Vagina (tissue), 2 donors: ENCODE measurements at regions of chr6 and their contacts with region 1.

Region 1: DNA sequence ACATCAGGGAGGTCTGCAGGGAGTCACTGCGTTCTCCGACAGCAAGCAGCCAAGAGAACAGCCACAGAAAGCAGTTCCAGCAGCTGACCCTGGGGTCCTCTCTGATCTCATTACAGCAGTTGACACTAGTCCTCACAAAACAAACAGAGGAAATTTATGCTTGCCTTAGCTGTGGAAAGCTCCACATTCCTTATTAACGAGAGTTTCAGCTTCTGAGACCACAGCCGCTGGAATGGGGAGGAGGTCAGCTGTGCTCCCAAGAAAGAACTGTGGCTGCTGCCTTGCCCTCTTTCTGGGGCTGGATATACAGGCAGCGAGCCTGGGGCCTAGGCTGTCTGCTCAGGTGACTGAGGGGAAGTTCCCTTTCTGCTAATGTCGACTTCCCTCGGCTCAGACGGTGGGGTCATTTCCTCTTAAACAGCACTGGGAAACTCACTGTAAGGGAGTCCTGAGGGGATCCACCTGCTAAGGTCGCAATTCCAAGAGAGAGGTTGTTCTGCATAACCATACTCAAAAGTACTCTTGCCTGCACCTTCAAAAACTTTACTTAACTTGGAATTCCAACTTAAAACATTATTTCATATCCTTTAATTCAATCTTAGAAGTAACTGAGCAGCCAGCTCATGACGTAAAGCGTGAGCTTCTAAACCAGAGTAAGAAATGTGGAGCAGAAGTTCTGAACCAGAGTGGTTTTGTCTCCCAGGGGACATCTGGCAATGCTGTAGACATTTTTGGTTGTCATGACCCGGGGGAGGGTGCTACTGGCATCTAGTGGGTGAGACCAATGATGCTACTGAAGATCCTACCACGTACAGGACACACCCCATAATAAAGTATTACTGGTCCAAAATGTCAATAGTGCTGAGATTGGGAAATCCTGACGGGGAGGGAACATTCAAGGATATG is 80.3 kb downstream of the BACH2 start:
- DNase-seq: no peak
- H3K4me3 ChIP-seq: no peak overlapping the region
- H3K27ac ChIP-seq: no peak overlapping the region
- H3K4me1 ChIP-seq: peaks cover 39% of the 10 kb centered on the region
- H3K27me3 ChIP-seq: no peaks in the 10 kb centered on the region
- CTCF ChIP-seq: no peak
- POLR2A ChIP-seq: no peak

Region 2: GRCh38 chr6:89819336-89820130 is 396.8 kb before region 1 on chr6 and contains the start of gene MDN1:
- intact Hi-C with region 1: loop called (anchors 5 kb)
- DNase-seq: peak in 1 of 2 donors; percentile 90
- H3K4me3 ChIP-seq: peak within 1 kb of the TSS; percentile 68 to 76
- H3K27ac ChIP-seq: peak within 1 kb of the TSS; percentile 71
- H3K4me1 ChIP-seq: peaks cover 26% of the 10 kb centered on the region
- H3K27me3 ChIP-seq: no peaks in the 10 kb centered on the region
- CTCF ChIP-seq: no peak
- POLR2A ChIP-seq: peak in 1 of 2 donors; percentile 46
- total RNA-seq, gene MDN1: 23.8 TPM

Region 3: GRCh38 chr6:90098001-90098531 is 118.3 kb before region 1 on chr6:
- intact Hi-C with region 1: loop called (anchors 5 kb)
- DNase-seq: peak in 1 of 2 donors; percentile 95
- H3K4me3 ChIP-seq: no peak overlapping the region
- H3K27ac ChIP-seq: peak overlapping the region; percentile 54
- H3K4me1 ChIP-seq: peaks cover 20% of the 10 kb centered on the region
- H3K27me3 ChIP-seq: no peaks in the 10 kb centered on the region
- CTCF ChIP-seq: peak in 2 of 3 experiments; percentile 17 to 20
- POLR2A ChIP-seq: no peak

Region 4: GRCh38 chr6:90315354-90315950 is 99.1 kb after region 1 on chr6:
- intact Hi-C with region 1: no loop called
- DNase-seq: no peak
- H3K4me3 ChIP-seq: no peak overlapping the region
- H3K27ac ChIP-seq: no peak overlapping the region
- H3K4me1 ChIP-seq: no peaks in the 10 kb centered on the region
- H3K27me3 ChIP-seq: no peaks in the 10 kb centered on the region
- CTCF ChIP-seq: no peak
- POLR2A ChIP-seq: no peak